ENCODE measurements at regions of chr6 and their contacts with region 1.

Region 1: DNA sequence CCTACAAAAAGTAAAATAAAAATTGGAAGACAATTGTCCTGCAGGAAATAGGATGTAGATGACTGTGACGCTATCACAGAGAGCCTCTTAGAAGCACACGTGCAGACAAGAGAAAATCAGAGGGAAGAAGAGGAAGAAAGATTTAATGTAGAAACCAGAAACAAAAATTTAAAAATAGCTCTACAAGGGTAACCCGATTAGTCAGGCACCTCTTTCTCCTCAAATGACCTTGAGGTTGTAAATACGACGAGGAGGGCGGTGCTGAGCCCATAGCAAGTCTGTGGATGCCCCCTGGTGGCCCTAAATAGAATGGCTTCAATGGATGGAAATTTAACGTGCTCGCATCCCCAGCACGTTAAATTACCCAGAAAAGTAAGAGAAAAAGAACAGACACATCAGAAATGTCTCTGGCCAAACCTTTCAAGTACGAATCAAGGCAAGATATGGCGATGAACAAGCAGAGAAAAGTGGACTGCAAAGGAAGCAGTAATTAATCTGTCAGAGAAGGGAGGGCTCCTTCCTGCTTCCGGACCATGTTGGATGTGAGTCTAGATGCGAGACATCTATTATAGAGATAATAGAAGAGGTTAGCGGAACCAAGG is 4.2 kb upstream of the PRPH2 start:
- DNase-seq: peak; percentile 79
- H3K4me3 Mint-ChIP-seq: peak overlapping the region; percentile 77
- H3K27ac Mint-ChIP-seq: peak overlapping the region; percentile 91
- H3K4me1 Mint-ChIP-seq: peaks cover 22% of the 10 kb centered on the region
- H3K27me3 Mint-ChIP-seq: no peaks in the 10 kb centered on the region

Region 2: DNA sequence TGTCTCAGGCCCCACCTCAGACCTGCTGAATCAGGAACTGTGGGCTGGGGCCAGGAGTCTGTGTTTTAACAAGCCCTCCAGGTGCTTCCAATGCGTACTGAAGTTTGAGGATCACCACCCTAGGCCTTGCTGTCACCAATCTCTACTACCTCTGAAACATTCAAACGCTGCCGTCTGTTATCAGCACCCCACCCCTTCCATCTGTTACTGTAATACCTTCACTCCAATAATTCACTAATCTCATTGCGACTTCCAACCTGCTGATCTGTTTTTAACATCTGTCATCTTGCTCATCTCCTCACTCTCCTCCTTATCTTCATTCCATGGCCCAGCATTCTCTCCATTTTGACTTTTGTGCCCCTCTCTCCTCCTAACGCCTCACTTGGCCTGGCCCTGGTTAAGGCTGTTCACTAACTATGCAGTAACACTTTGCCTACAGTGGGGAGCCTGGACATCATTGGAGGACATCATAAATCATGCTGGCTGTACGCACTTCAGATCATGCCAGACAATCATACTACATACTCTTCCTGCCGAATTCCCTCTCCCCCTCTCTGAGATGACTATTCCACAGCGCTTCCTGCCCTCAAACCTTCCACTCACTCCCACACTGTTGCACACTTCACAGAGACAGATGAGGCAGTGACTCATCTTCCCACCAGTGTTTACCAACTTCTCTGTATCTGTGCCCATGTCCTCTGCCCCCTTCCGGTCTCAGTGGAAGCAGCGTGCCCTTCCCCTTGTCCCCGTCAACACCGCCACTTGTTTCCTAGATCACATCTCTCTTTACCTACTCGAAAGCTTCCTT is 528.8 kb before region 1 on chr6:
- CTCF ChIA-PET with region 1: no interaction called
- POLR2A ChIA-PET with region 1: no interaction called
- DNase-seq: peak; percentile 26
- H3K4me3 Mint-ChIP-seq: no peak overlapping the region
- H3K27ac Mint-ChIP-seq: no peak overlapping the region
- H3K4me1 Mint-ChIP-seq: peaks cover 10% of the 10 kb centered on the region
- H3K27me3 Mint-ChIP-seq: no peaks in the 10 kb centered on the region

Region 3: GRCh38 chr6:42563697-42564505 is 162.7 kb before region 1 on chr6 and contains the start of gene UBR2:
- CTCF ChIA-PET with region 1: interaction called, 4 read pairs
- POLR2A ChIA-PET with region 1: interaction called, 13 read pairs
- DNase-seq: peak; percentile 95
- H3K4me3 Mint-ChIP-seq: peak within 1 kb of the TSS; percentile 92
- H3K27ac Mint-ChIP-seq: peak within 1 kb of the TSS; percentile 83
- H3K4me1 Mint-ChIP-seq: peaks cover 33% of the 10 kb centered on the region
- H3K27me3 Mint-ChIP-seq: no peaks in the 10 kb centered on the region
- total RNA-seq, gene UBR2: 34.0 to 36.2 TPM

Region 4: DNA sequence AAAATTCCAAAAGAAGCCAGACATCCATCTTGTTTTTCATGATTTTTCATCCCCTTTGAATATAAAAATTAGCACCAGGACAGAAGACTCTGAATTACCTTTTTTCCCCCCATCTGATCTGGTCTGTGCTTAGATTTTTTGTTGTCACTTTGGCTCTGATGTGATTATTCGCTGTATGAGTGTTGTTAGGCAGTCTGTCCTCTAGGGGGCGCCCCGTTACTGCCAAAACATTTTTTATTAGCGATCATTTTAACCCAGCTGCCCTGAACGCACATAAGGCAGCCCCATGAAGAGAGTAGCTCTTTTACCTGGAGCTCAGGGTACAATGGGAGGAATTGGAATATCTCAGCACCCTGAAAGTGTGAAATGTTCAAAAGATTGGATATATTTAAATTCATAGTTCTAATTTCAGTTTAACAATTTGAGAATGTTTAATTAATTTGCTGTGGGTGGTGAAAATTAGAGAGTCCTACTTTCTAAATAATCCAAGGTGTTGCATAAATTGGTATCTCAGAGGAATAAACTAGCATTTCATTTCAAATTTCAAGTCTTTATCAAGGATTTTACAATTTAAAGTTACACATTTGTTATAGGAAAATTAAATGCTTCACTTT is 64.9 kb before region 1 on chr6:
- CTCF ChIA-PET with region 1: interaction called, 79 read pairs
- POLR2A ChIA-PET with region 1: interaction called, 16 read pairs
- DNase-seq: peak; percentile 86
- H3K4me3 Mint-ChIP-seq: no peak overlapping the region
- H3K27ac Mint-ChIP-seq: no peak overlapping the region
- H3K4me1 Mint-ChIP-seq: peaks cover 1% of the 10 kb centered on the region
- H3K27me3 Mint-ChIP-seq: no peaks in the 10 kb centered on the region

Region 5: GRCh38 chr6:42692137-42692911 is 34.3 kb before region 1 on chr6:
- CTCF ChIA-PET with region 1: interaction called, 22 read pairs
- POLR2A ChIA-PET with region 1: interaction called, 7 read pairs
- DNase-seq: no peak
- H3K4me3 Mint-ChIP-seq: no peak overlapping the region
- H3K27ac Mint-ChIP-seq: peak overlapping the region; percentile 29
- H3K4me1 Mint-ChIP-seq: peaks cover 35% of the 10 kb centered on the region
- H3K27me3 Mint-ChIP-seq: no peaks in the 10 kb centered on the region

Region 6: DNA sequence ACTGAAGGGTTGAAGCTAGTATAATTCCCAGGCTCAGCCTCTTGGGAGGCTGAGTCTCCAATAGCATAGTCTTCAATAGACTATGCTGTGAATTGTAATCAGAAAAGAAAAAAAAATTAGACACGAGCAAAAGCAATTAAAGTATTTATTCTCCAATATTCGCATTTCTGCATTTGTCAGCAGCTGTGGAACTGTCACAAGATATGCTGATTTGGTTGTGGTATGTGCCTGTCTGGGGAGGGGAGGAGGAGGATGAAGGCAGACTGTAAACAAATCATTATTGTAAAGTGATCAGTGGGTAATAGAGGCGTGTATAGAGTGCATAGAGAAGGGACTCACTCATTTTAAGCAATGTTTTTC is 45.1 kb after region 1 on chr6:
- CTCF ChIA-PET with region 1: interaction called, 5 read pairs
- POLR2A ChIA-PET with region 1: interaction called, 13 read pairs
- DNase-seq: peak; percentile 43
- H3K4me3 Mint-ChIP-seq: peak overlapping the region; percentile 62
- H3K27ac Mint-ChIP-seq: peak overlapping the region; percentile 100
- H3K4me1 Mint-ChIP-seq: peaks cover 64% of the 10 kb centered on the region
- H3K27me3 Mint-ChIP-seq: no peaks in the 10 kb centered on the region

Region 7: DNA sequence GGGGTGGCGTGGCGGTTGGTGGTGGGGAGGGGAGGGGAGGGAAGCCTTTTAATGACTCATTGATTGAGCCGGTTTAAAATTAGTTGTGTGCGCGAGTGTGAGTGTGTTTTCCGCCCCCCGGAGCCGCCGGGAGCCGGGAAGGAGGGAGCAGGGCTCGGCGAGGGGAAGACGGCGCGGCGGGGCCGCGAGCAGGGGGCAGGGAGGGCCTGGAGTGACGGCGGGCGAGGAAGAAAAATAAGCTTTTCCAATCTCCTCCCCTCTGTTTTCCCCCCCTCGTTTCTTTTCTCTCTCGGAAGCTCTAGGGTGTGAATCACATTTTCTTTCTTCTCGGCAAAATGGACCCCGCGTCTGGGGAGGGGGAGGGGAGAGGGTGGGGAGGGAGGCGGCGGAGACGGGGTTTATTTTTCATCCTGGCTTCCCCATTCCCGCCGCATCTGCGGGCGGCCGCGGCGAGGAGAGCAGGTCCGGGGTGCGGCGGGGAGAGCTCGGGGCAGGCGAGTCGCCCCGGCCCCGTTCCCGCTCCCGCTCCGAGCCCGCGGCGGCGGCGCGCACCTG is 56.1 kb after region 1 on chr6:
- CTCF ChIA-PET with region 1: interaction called, 4 read pairs
- POLR2A ChIA-PET with region 1: interaction called, 23 read pairs
- DNase-seq: peak; percentile 64
- H3K4me3 Mint-ChIP-seq: peak overlapping the region; percentile 95
- H3K27ac Mint-ChIP-seq: peak overlapping the region; percentile 100
- H3K4me1 Mint-ChIP-seq: peaks cover 18% of the 10 kb centered on the region
- H3K27me3 Mint-ChIP-seq: no peaks in the 10 kb centered on the region

Region 8: GRCh38 chr6:44431118-44431725 is 1704.6 kb after region 1 on chr6:
- CTCF ChIA-PET with region 1: no interaction called
- POLR2A ChIA-PET with region 1: no interaction called
- DNase-seq: peak; percentile 51
- H3K4me3 Mint-ChIP-seq: no peak overlapping the region
- H3K27ac Mint-ChIP-seq: no peak overlapping the region
- H3K4me1 Mint-ChIP-seq: peaks cover 1% of the 10 kb centered on the region
- H3K27me3 Mint-ChIP-seq: no peaks in the 10 kb centered on the region

Measured in activated CD4-positive, alpha-beta memory T cell treated with anti-CD3 and anti-CD28 coated beads, Interleukin-2, amount 10 ng/mL, durations not matched to agents 7 days and 5 days (primary cell).